Mammary epithelial cell (primary cell): ENCODE measurements at regions of chr4 and their contacts with region 1.

Region 1: DNA sequence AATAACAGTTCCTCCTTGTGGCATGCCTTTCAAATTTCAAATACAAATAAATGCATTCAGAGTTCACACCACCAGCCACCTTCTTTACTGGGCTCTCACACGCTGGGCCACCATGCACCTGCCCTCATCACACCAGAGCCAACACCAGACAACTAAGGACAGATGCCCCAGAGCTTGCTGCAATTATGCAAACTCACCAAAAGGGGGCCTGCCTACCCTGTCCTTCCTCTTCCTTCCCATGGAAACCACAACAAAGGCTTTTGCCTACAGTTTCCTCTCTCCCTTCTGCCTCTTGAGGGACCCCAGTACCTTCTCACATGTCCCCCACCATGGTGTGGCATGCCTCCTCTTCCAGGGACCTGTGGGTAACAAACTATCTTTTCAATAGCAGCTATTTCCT is 1333.9 kb upstream of the TENM3 start:
- DNase-seq: peak; percentile 40
- H3K4me3 ChIP-seq: no peak overlapping the region
- H3K27ac ChIP-seq: no peak overlapping the region
- H3K4me1 ChIP-seq: peaks cover 9% of the 10 kb centered on the region
- H3K27me3 ChIP-seq: no peaks in the 10 kb centered on the region
- CTCF ChIP-seq: peak; percentile 82 to 87

Region 2: DNA sequence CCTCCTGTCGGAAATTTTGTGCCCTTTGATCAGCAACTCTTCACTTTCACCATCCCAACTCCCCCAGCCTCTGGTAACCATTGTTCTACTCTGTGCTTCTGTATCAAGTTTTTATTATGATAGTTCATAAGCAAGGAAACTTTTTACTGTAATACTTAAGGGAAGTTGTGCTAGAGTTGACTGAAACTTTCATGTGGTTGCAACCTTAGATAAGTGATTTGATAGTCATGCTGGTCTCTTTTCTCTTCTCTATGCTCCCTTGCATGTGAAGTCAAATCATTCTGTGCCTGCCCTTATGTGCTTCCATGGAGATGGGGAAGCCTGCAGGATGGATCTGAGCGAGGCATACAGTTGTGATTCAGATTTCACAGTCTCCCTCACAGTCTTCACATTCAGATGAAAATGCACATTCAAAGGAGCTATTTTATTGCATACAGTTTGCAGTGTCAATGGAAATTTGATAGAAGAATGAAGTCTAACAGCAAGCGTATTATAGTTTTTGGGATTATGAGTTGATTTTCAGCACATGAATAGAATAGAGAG is 94.3 kb before region 1 on chr4:
- CTCF ChIA-PET with region 1: no interaction called
- dilution Hi-C with region 1: no loop called
- in situ Hi-C with region 1: no loop called
- intact Hi-C with region 1: no loop called
- DNase-seq: no peak
- H3K4me3 ChIP-seq: no peak overlapping the region
- H3K27ac ChIP-seq: no peak overlapping the region
- H3K4me1 ChIP-seq: no peaks in the 10 kb centered on the region
- H3K27me3 ChIP-seq: no peaks in the 10 kb centered on the region
- CTCF ChIP-seq: no peak

Region 3: DNA sequence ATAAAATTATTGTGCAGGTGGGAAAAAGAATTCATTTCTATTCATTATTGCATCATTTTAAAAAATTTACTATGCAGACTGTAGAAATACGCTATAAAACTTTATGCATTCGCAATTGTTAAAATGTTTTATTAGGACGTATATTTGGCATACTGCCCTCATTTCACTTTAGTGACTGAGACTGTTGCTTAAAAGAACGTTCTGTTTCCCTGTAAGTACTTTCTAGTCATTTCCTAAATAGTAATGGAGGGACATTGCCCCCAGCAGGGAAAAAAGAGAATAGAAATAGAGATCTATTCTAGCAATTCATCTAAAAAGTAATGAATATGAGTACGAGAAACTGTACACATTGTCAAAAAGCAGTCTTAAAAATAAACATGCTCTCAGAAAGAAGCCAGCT is 38.1 kb after region 1 on chr4:
- CTCF ChIA-PET with region 1: no interaction called
- dilution Hi-C with region 1: no loop called
- in situ Hi-C with region 1: loop called in 1 of 2 experiments (anchors 5 kb)
- intact Hi-C with region 1: loop called (anchors 1 kb)
- DNase-seq: peak; percentile 39
- H3K4me3 ChIP-seq: no peak overlapping the region
- H3K27ac ChIP-seq: no peak overlapping the region
- H3K4me1 ChIP-seq: peaks cover 22% of the 10 kb centered on the region
- H3K27me3 ChIP-seq: no peaks in the 10 kb centered on the region
- CTCF ChIP-seq: peak; percentile 42 to 57

Region 4: DNA sequence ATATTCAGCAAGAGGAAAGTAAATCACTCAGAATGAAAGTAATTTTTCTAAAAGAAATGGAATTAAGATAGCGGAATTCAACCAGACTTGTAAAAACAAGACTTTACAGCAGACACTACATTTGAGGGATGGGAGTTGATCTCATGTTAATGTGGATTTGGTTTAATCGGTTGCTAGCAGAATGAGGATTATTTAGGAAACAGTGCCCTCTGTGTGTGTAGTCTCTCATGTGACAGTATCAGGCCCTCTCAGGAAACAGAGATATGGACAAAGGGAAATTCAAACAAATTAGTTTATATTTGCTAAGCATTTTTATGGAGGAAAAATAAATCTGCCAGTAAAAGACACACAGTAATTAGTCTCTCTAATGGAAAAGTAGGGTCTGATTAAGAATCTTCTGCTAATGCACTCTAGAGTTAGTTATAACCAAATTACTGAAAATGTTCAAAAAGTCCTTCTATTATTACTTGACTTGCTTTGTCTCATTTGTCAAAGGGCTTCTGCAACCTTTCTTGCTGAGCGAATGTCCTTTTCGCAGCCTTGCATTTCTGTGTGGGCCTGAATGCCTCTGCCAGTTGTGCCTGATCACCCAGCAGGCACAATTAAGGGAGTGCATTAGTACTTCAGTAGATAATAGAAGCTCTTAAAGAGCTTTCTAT is 51.6 kb after region 1 on chr4:
- CTCF ChIA-PET with region 1: no interaction called
- dilution Hi-C with region 1: no loop called
- in situ Hi-C with region 1: no loop called
- intact Hi-C with region 1: loop called (anchors 5 kb)
- DNase-seq: no peak
- H3K4me3 ChIP-seq: no peak overlapping the region
- H3K27ac ChIP-seq: no peak overlapping the region
- H3K4me1 ChIP-seq: no peaks in the 10 kb centered on the region
- H3K27me3 ChIP-seq: no peaks in the 10 kb centered on the region
- CTCF ChIP-seq: peak in 1 of 2 donors; percentile 45

Region 5: GRCh38 chr4:180973894-180974293 is 64.6 kb after region 1 on chr4:
- CTCF ChIA-PET with region 1: no interaction called
- dilution Hi-C with region 1: no loop called
- in situ Hi-C with region 1: no loop called
- intact Hi-C with region 1: no loop called
- DNase-seq: no peak
- H3K4me3 ChIP-seq: no peak overlapping the region
- H3K27ac ChIP-seq: no peak overlapping the region
- H3K4me1 ChIP-seq: no peaks in the 10 kb centered on the region
- H3K27me3 ChIP-seq: no peaks in the 10 kb centered on the region
- CTCF ChIP-seq: no peak

Region 6: GRCh38 chr4:181021213-181021612 is 111.9 kb after region 1 on chr4:
- CTCF ChIA-PET with region 1: no interaction called
- dilution Hi-C with region 1: no loop called
- in situ Hi-C with region 1: no loop called
- intact Hi-C with region 1: no loop called
- DNase-seq: no peak
- H3K4me3 ChIP-seq: no peak overlapping the region
- H3K27ac ChIP-seq: no peak overlapping the region
- H3K4me1 ChIP-seq: no peaks in the 10 kb centered on the region
- H3K27me3 ChIP-seq: no peaks in the 10 kb centered on the region
- CTCF ChIP-seq: no peak